Right ventricle myocardium inferior (tissue), 1 donor: ENCODE measurements at regions of chrX and their contacts with region 1.

Region 1: GRCh38 chrX:109856974-109857373 is 123.9 kb upstream of the ACSL4 start:
- DNase-seq: no peak
- ATAC-seq: no peak

Region 2: GRCh38 chrX:109709129-109709631 is 147.8 kb before region 1 on chrX:
- intact Hi-C with region 1: loop called (anchors 2 kb)
- DNase-seq: no peak
- ATAC-seq: peak; percentile 39